Endothelial cell of umbilical vein (primary cell): ENCODE measurements at regions of chr20 and their contacts with region 1.

Region 1: DNA sequence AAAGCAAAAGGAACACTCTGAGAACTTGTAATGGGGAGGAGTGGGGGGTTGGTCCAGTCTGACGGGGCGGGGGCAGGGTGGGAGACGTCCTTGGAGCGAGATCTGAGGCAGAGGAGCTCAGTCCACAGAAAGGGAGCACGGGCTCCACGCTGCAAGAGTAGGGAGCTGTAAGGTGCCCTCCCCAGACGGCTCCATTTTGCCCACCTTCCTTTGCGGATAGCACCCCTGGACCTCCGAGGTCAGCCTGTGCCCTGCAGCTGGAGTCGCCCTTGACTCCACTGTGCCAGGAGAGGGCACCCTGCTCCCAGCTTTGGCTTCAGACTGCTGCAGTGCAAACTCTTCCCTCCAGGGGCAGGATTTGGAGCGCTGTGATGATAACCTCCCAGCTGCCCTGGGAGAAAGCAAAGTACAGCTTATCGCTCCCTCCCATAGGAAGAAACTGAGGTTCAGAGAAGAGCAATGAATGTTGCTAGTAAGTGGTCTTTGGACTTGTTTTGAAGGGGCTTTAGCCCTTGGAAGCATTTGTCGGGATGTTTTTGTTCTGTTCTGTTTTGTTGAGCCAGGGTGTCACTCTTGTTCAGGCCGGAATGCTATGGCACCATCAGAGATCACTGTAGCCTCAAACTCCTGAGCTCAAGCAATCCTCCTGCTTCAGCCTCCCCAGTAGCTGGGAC is 9.5 kb upstream of the AHCY start:
- DNase-seq: peak; percentile 87
- H3K4me3 ChIP-seq: peak overlapping the region in 1 of 3 experiments; percentile 11
- H3K27ac ChIP-seq: no peak overlapping the region
- H3K4me1 ChIP-seq: peaks cover 9% of the 10 kb centered on the region
- H3K27me3 ChIP-seq: no peaks in the 10 kb centered on the region
- CTCF ChIP-seq: peak; percentile 100
- POLR2A ChIP-seq: no peak

Region 2: GRCh38 chr20:34180460-34181120 is 132.1 kb before region 1 on chr20:
- CTCF ChIA-PET with region 1: no interaction called
- POLR2A ChIA-PET with region 1: no interaction called
- dilution Hi-C with region 1: no loop called
- intact Hi-C with region 1: no loop called
- DNase-seq: no peak
- H3K4me3 ChIP-seq: no peak overlapping the region
- H3K27ac ChIP-seq: no peak overlapping the region
- H3K4me1 ChIP-seq: no peaks in the 10 kb centered on the region
- H3K27me3 ChIP-seq: peaks cover 12 to 38% of the 10 kb centered on the region in 2 experiments
- CTCF ChIP-seq: no peak
- POLR2A ChIP-seq: no peak

Region 3: DNA sequence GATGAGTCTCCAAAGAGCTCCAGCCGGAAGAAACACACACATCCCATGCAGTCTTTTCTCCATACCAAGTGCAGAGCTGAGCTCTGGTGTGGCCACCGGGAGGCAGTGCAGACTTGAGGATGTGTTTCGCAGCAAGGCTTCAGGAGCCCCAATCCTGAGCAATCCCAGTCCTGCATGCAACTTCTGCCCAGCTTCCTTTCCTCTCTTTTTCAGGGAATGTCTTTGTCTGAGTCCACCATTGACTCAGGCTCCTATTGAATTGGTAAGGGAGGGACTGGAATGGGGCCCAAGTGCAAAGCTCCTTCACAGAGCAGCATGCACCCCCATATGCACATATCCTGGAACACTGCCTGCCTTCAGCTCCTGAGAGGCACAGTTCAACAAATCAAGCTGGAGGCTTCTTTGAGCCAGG is 122.0 kb before region 1 on chr20:
- CTCF ChIA-PET with region 1: interaction called, 66 read pairs
- POLR2A ChIA-PET with region 1: no interaction called
- dilution Hi-C with region 1: no loop called
- intact Hi-C with region 1: no loop called
- DNase-seq: peak; percentile 82
- H3K4me3 ChIP-seq: no peak overlapping the region
- H3K27ac ChIP-seq: no peak overlapping the region
- H3K4me1 ChIP-seq: no peaks in the 10 kb centered on the region
- H3K27me3 ChIP-seq: peaks cover 37 to 44% of the 10 kb centered on the region in 2 experiments
- CTCF ChIP-seq: peak; percentile 86 to 88
- POLR2A ChIP-seq: no peak

Region 4: GRCh38 chr20:34385464-34385863 is 72.8 kb after region 1 on chr20:
- CTCF ChIA-PET with region 1: interaction called, 10 read pairs
- POLR2A ChIA-PET with region 1: no interaction called
- dilution Hi-C with region 1: no loop called
- intact Hi-C with region 1: no loop called
- DNase-seq: no peak
- H3K4me3 ChIP-seq: no peak overlapping the region
- H3K27ac ChIP-seq: no peak overlapping the region
- H3K4me1 ChIP-seq: peaks cover 19% of the 10 kb centered on the region
- H3K27me3 ChIP-seq: no peaks in the 10 kb centered on the region
- CTCF ChIP-seq: no peak
- POLR2A ChIP-seq: no peak

Region 5: DNA sequence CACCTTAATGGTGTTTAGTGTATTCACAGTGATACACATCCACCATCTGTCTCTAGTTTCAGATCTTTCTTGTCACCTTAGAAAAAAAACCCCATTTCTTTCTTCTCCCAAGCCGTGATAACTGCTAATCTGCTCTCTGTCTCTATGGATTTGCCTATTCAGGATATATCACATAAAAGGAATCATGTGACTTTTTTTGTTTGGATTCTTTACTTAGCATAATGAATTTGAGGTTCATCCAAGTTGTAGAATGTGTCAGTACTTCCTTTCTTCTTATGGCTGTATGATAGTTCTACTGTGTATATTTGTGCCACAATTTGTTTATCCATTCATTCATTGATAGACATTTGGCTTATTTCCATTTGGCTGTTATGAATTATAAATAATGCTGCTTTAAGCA is 107.5 kb after region 1 on chr20:
- CTCF ChIA-PET with region 1: interaction called, 16 read pairs
- POLR2A ChIA-PET with region 1: no interaction called
- dilution Hi-C with region 1: no loop called
- intact Hi-C with region 1: no loop called
- DNase-seq: peak; percentile 61
- H3K4me3 ChIP-seq: no peak overlapping the region
- H3K27ac ChIP-seq: no peak overlapping the region
- H3K4me1 ChIP-seq: peaks cover 7% of the 10 kb centered on the region
- H3K27me3 ChIP-seq: no peaks in the 10 kb centered on the region
- CTCF ChIP-seq: no peak
- POLR2A ChIP-seq: no peak

Region 6: DNA sequence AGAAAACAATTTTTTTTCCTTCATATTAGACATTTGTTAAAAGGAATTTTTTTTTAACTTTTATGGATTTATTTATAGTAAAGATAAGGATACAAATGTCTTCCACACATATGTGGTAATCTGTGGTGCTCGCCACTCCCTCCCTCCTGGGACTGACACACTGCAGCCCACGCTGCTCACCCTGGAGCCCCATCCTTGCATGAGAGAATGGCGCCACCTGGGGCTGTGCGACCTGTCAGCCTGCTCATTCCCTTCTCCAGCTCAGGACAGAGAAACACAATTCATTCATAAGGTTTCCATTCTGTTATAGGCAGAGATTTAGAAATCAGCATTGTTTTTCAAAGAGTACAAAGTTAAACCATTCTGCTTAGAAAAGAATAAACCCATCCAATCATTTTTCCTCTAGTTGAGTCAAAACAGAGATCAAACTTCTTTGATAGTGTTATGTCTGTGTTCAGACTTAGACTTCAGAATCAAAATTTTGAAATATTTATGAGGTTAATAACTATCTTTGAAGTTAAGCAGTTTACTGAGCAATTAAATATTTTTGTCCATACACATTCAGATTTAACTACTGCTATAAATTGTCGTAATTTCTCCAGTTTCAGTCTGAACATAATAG is 160.7 kb after region 1 on chr20:
- CTCF ChIA-PET with region 1: interaction called, 42 read pairs
- POLR2A ChIA-PET with region 1: no interaction called
- dilution Hi-C with region 1: no loop called
- intact Hi-C with region 1: loop called (anchors 1 kb)
- DNase-seq: peak; percentile 21
- H3K4me3 ChIP-seq: no peak overlapping the region
- H3K27ac ChIP-seq: no peak overlapping the region
- H3K4me1 ChIP-seq: peaks cover 14% of the 10 kb centered on the region
- H3K27me3 ChIP-seq: no peaks in the 10 kb centered on the region
- CTCF ChIP-seq: peak in 1 of 2 donors; percentile 20
- POLR2A ChIP-seq: no peak

Region 7: GRCh38 chr20:34516247-34517113 is 203.8 kb after region 1 on chr20 and contains the start of gene DYNLRB1:
- CTCF ChIA-PET with region 1: interaction called, 54 read pairs
- POLR2A ChIA-PET with region 1: no interaction called
- dilution Hi-C with region 1: no loop called
- intact Hi-C with region 1: no loop called
- DNase-seq: peak; percentile 98
- H3K4me3 ChIP-seq: peak within 1 kb of the TSS; percentile 61 to 92 (median 79)
- H3K27ac ChIP-seq: peak within 1 kb of the TSS; percentile 76
- H3K4me1 ChIP-seq: peaks cover 16% of the 10 kb centered on the region
- H3K27me3 ChIP-seq: no peaks in the 10 kb centered on the region
- CTCF ChIP-seq: no peak
- POLR2A ChIP-seq: peak; percentile 94
- total RNA-seq, gene DYNLRB1: 133 and 142 TPM in 2 replicates

Region 8: GRCh38 chr20:34704177-34705007 is 391.7 kb after region 1 on chr20 and contains the start of gene TP53INP2:
- CTCF ChIA-PET with region 1: interaction called, 10 read pairs
- POLR2A ChIA-PET with region 1: no interaction called
- dilution Hi-C with region 1: no loop called
- intact Hi-C with region 1: loop called (anchors 1 kb)
- DNase-seq: peak; percentile 81
- H3K4me3 ChIP-seq: peak within 1 kb of the TSS; percentile 50 to 79 (median 75)
- H3K27ac ChIP-seq: peak within 1 kb of the TSS; percentile 88
- H3K4me1 ChIP-seq: peaks cover 14% of the 10 kb centered on the region
- H3K27me3 ChIP-seq: no peaks in the 10 kb centered on the region
- CTCF ChIP-seq: no peak
- POLR2A ChIP-seq: peak; percentile 81
- total RNA-seq, gene TP53INP2: 30.5 and 36.4 TPM in 2 replicates